ENCODE measurements at regions of chr20 and their contacts with region 1.

Region 1: GRCh38 chr20:57693002-57693640 is 16.7 kb downstream of the PMEPA1 start:
- DNase-seq: peak; percentile 98 to 100
- H3K4me3 ChIP-seq: peak overlapping the region; percentile 38; the same call in 1 of the 2 replicates
- H3K27ac ChIP-seq: peak overlapping the region; percentile 96
- H3K4me1 ChIP-seq: peaks cover 96% of the 10 kb centered on the region
- H3K27me3 ChIP-seq: no peaks in the 10 kb centered on the region
- CTCF ChIP-seq: peak; percentile 77

Region 2: GRCh38 chr20:56582542-56582941 is 1110.6 kb before region 1 on chr20:
- CTCF ChIA-PET with region 1: no interaction called
- POLR2A ChIA-PET with region 1: interaction called, 15 read pairs
- intact Hi-C with region 1: no loop called
- DNase-seq: no peak
- H3K4me3 ChIP-seq: no peak overlapping the region
- H3K27ac ChIP-seq: no peak overlapping the region
- H3K4me1 ChIP-seq: peaks cover 25% of the 10 kb centered on the region
- H3K27me3 ChIP-seq: no peaks in the 10 kb centered on the region
- CTCF ChIP-seq: no peak

Region 3: DNA sequence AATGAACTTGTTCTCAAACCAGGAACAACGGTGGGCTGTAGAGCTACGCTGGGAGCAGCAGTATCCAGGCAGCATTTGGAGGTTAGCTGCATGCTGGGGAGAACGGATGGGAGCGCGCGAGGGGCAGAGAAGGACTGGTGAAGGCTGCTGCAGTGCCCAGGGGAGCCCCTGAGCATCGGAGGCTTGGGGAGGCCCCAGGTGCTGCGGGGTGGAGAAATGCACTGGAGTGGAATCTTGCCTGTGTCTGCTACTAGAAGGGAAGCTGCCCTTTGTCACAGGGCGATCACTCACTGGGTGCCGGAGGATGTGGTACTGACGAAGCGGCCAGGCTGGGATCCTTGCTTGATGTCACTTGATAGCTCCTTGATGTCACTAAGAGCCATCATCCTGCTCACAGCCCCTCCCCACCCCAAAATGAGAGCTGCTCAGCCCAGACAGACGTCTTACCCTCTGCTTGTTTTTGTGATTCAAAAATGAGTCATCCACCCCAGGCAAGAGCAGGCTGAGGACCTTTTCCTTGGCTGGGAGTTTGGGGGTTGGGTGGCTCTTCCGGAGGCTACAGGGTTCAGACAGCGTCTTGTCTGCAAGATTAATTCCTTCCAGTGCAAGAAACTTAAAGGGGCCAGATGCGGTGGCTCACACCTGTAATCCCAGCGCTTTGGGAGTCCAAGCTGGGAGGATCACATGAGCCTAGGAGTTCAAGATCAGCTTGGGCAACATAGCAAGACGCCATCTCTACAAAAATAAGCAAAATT is 79.3 kb after region 1 on chr20:
- CTCF ChIA-PET with region 1: no interaction called
- POLR2A ChIA-PET with region 1: interaction called, 6 read pairs
- intact Hi-C with region 1: loop called (anchors 1 kb)
- DNase-seq: peak; percentile 89 to 92
- H3K4me3 ChIP-seq: no peak overlapping the region
- H3K27ac ChIP-seq: no peak overlapping the region
- H3K4me1 ChIP-seq: peaks cover 26% of the 10 kb centered on the region
- H3K27me3 ChIP-seq: no peaks in the 10 kb centered on the region
- CTCF ChIP-seq: no peak

Region 4: DNA sequence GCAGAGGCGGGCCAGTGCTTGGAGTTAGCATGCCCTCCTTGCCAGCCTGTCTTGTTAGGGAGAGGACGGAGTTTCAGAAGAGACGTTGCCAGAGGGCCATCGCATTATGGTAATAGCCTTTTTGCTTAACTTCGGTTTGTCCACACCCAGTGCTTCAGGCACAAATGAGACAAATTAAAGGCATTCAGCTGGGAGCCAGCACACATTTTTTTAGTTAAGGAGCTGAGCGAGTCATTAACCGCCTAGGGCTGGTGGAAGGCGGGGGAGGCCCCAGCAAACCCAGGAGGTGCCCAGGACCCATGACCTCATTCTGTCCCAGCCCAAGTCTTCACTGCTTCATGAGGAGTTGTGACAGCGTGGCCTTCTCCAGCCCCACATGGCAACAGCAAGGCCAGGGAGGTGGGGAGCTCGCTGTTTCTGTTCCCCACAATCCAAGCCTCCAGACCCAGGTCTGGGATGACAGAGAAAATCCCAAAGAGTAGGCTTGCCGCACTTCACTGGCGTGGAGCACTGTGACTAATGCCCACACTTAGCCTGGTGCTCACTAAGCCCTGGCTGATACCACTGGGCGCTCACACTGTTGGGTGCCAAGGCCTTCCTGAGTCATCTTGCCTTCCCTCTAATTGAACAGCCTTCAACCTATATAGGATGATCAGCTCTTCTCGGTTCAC is 298.2 kb after region 1 on chr20:
- CTCF ChIA-PET with region 1: no interaction called
- POLR2A ChIA-PET with region 1: no interaction called
- intact Hi-C with region 1: loop called (anchors 1 kb)
- DNase-seq: peak; percentile 84 to 99
- H3K4me3 ChIP-seq: no peak overlapping the region
- H3K27ac ChIP-seq: peak overlapping the region; percentile 82
- H3K4me1 ChIP-seq: peaks cover 47% of the 10 kb centered on the region
- H3K27me3 ChIP-seq: no peaks in the 10 kb centered on the region
- CTCF ChIP-seq: no peak

Region 5: DNA sequence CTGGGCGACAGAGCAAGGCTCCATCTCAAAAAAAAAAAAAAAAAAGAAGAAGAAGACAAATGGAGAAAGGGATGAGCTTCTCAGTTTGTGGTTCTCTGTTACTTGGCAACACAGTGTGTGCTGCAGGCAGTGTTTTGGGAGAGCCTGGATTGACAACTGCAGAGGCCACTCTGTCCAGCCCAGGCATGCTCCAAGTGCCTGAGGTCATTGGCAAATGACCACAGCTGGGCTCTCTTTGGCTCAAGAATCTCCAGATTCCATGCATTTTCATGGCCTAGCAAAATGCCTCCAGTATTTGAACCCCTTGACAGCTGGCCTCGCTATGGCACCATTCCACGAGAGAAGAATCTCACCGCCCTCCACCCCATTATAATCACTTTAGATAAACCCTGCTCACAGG is 409.1 kb after region 1 on chr20:
- CTCF ChIA-PET with region 1: no interaction called
- POLR2A ChIA-PET with region 1: interaction called, 5 read pairs
- intact Hi-C with region 1: loop called (anchors 2 kb)
- DNase-seq: peak; percentile 69 to 72
- H3K4me3 ChIP-seq: no peak overlapping the region
- H3K27ac ChIP-seq: peak overlapping the region; percentile 20; the same call in 1 of the 2 replicates
- H3K4me1 ChIP-seq: peaks cover 23% of the 10 kb centered on the region
- H3K27me3 ChIP-seq: no peaks in the 10 kb centered on the region
- CTCF ChIP-seq: no peak

Region 6: GRCh38 chr20:58209652-58210397 is 516.7 kb after region 1 on chr20:
- CTCF ChIA-PET with region 1: interaction called, 3 read pairs
- POLR2A ChIA-PET with region 1: no interaction called
- intact Hi-C with region 1: loop called (anchors 2 kb)
- DNase-seq: peak; percentile 53 to 85
- H3K4me3 ChIP-seq: no peak overlapping the region
- H3K27ac ChIP-seq: peak overlapping the region; percentile 8
- H3K4me1 ChIP-seq: no peaks in the 10 kb centered on the region
- H3K27me3 ChIP-seq: no peaks in the 10 kb centered on the region
- CTCF ChIP-seq: peak; percentile 100

Measured in PC-9 (cell line).